Lower leg skin (tissue), 4 donors: ENCODE measurements at regions of chr10 and their contacts with region 1.

Region 1: GRCh38 chr10:84147347-84147746 is 8.0 kb downstream of the GHITM start:
- DNase-seq: no peak
- H3K4me3 ChIP-seq: no peak overlapping the region
- CTCF ChIP-seq: no peak
- POLR2A ChIP-seq: no peak

Region 2: DNA sequence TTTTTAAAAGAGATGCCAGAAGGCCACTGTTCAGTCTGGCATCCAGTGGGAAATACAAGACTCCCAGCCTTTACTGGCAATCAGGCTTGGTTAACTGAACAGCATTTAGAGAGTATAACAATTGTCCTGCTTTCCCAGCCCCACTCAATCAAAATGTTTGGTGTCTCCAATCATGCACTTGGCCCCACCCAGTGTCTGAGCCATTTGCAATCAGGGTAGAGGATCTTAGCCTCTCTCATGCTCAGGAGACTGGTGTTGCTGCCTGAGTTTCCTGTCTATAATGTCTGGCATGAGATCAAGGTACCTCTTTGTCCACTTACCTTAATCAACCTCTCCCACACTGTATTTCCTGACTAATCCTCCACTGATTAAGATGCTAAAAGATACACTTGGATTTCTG is 298.2 kb before region 1 on chr10:
- intact Hi-C with region 1: no loop called
- DNase-seq: no peak
- H3K4me3 ChIP-seq: no peak overlapping the region
- CTCF ChIP-seq: no peak
- POLR2A ChIP-seq: no peak

Region 3: GRCh38 chr10:84214612-84215235 is 67.4 kb after region 1 on chr10:
- intact Hi-C with region 1: loop called (anchors 5 kb)
- DNase-seq: peak in 1 of 2 donors; percentile 60
- H3K4me3 ChIP-seq: no peak overlapping the region
- CTCF ChIP-seq: no peak
- POLR2A ChIP-seq: no peak

Region 4: GRCh38 chr10:84244651-84245270 is 97.4 kb after region 1 on chr10 and contains the start of gene RGR:
- intact Hi-C with region 1: no loop called
- DNase-seq: peak in 1 of 2 donors; percentile 32
- H3K4me3 ChIP-seq: no peak within 1 kb of the TSS
- CTCF ChIP-seq: no peak
- POLR2A ChIP-seq: no peak
- total RNA-seq, gene RGR: 0.08 TPM in 1 of 4 donors, not detected in the others